Caco-2 (cell line): ENCODE measurements at regions of chr6 and their contacts with region 1.

Region 1: DNA sequence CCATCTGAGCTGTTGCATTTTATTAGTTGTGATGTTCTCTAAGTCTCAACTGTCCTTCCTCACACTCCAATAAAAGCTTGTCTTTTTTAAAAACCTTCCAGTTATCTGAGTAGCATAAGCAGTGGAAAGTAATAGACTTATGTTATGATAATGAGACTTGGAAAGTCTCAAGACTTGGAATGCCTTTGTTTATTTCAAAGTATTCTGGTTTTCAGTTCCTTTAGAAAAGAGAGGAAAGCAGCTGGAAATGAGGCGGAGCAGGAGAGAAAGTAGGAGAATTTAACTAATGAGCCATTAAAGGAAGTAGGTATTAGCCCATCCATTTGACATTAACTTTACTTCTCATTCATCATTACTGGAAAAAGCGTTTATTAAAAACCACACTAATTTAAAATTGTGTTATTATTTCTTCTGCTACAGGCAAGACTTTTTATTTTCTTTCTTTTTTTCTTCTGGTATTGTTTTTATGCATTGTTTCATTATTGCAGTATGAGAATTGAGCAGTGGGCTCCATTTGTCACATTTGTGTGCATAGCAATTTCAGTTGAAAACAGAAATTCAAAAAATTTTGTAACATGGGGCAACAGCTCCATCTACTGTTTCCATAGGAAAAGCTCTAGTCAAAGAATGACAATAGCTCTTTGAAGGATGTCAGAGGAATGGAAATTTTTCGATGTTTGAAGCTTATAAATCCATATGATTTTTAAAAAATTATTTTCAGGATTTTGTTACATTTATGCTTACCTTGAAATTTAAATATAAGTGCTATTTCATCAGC is 194.8 kb downstream of the COL9A1 start:
- DNase-seq: peak in 1 of 2 experiments; percentile 37
- H3K4me3 ChIP-seq: no peak overlapping the region
- H3K4me3 Mint-ChIP-seq: no peak overlapping the region
- H3K27ac Mint-ChIP-seq: no peak overlapping the region
- H3K4me1 ChIP-seq: no peaks in the 10 kb centered on the region
- H3K4me1 Mint-ChIP-seq: no peaks in the 10 kb centered on the region
- H3K27me3 ChIP-seq: no peaks in the 10 kb centered on the region
- H3K27me3 Mint-ChIP-seq: peaks cover 12% of the 10 kb centered on the region
- CTCF ChIP-seq: peak; percentile 68

Region 2: GRCh38 chr6:68343901-68344300 is 1764.1 kb before region 1 on chr6:
- CTCF ChIA-PET with region 1: no interaction called
- POLR2A ChIA-PET with region 1: no interaction called
- intact Hi-C with region 1: loop called (anchors 10 kb)
- DNase-seq: peak; percentile 46 to 61
- H3K4me3 ChIP-seq: no peak overlapping the region
- H3K4me3 Mint-ChIP-seq: no peak overlapping the region
- H3K27ac Mint-ChIP-seq: no peak overlapping the region
- H3K4me1 ChIP-seq: no peaks in the 10 kb centered on the region
- H3K4me1 Mint-ChIP-seq: no peaks in the 10 kb centered on the region
- H3K27me3 ChIP-seq: no peaks in the 10 kb centered on the region
- H3K27me3 Mint-ChIP-seq: no peaks in the 10 kb centered on the region
- CTCF ChIP-seq: peak; percentile 33 to 57

Region 3: GRCh38 chr6:68958327-68958726 is 1149.7 kb before region 1 on chr6:
- CTCF ChIA-PET with region 1: no interaction called
- POLR2A ChIA-PET with region 1: interaction called, 11 read pairs
- intact Hi-C with region 1: no loop called
- DNase-seq: no peak
- H3K4me3 ChIP-seq: no peak overlapping the region
- H3K4me3 Mint-ChIP-seq: no peak overlapping the region
- H3K27ac Mint-ChIP-seq: no peak overlapping the region
- H3K4me1 ChIP-seq: no peaks in the 10 kb centered on the region
- H3K4me1 Mint-ChIP-seq: no peaks in the 10 kb centered on the region
- H3K27me3 ChIP-seq: no peaks in the 10 kb centered on the region
- H3K27me3 Mint-ChIP-seq: peaks cover 8% of the 10 kb centered on the region
- CTCF ChIP-seq: no peak

Region 4: DNA sequence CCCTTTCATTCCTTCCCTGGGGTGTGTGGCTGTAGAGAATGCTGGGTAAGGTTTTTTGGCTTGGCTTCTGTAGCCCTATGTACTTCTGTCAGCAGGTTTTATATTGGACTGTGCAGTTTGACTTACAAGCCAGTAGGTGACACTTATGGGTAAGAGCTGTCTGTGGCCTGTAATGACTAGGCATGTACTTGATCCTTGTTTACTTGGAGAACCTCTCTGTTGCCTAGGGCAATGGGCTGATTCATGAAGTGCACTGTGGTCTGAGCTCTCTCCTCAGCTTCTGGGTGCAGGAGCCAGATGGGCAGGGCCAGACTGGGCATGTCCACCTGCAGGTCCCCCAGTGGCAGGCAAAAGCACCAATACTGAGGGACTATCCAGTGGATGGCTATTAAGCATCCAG is 928.4 kb before region 1 on chr6:
- CTCF ChIA-PET with region 1: no interaction called
- POLR2A ChIA-PET with region 1: no interaction called
- intact Hi-C with region 1: loop called (anchors 10 kb)
- DNase-seq: peak in 1 of 2 experiments; percentile 5
- H3K4me3 ChIP-seq: no peak overlapping the region
- H3K4me3 Mint-ChIP-seq: no peak overlapping the region
- H3K27ac Mint-ChIP-seq: no peak overlapping the region
- H3K4me1 ChIP-seq: 0 out of 2 replicates have a peak, but pooled peaks cover 4% of the 10 kb centered on the region
- H3K4me1 Mint-ChIP-seq: no peaks in the 10 kb centered on the region
- H3K27me3 ChIP-seq: no peaks in the 10 kb centered on the region
- H3K27me3 Mint-ChIP-seq: no peaks in the 10 kb centered on the region
- CTCF ChIP-seq: no peak

Region 5: DNA sequence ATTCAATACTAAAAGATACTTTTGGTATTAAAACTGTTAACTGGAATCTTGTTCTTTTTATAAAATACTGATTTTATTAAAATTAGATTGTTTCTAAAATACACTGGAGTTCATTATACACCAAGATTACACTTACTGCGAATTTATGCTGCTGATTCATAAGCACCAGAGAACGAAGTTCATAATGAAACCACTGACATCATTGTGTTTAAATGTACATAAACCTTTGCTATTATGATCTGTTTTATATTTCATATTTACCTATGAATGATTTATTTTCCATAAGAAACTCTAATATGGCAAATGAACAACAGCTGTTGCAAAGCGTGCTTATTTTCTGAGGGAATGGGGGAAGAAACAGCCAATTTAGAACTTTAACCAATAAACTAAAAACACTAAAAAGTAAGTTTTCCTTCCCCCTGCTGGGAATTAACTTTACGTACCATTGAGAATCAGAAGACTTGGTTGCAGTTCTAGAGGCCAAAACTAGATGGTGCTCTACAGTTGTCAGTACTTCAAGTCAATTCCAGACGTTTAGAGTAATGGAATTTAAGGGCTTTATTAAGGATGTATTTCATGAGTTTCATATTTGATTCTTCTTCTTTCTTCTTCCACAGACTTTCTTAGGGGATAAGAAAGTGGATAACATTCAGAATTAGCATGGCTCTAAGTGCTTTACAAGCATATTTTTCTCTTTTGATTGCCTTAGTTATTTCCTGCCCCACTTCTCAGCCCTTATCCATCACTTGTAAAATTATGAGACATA is 272.4 kb before region 1 on chr6:
- CTCF ChIA-PET with region 1: no interaction called
- POLR2A ChIA-PET with region 1: no interaction called
- intact Hi-C with region 1: loop called (anchors 1 kb)
- DNase-seq: peak in 1 of 2 experiments; percentile 42
- H3K4me3 ChIP-seq: no peak overlapping the region
- H3K4me3 Mint-ChIP-seq: no peak overlapping the region
- H3K27ac Mint-ChIP-seq: no peak overlapping the region
- H3K4me1 ChIP-seq: no peaks in the 10 kb centered on the region
- H3K4me1 Mint-ChIP-seq: no peaks in the 10 kb centered on the region
- H3K27me3 ChIP-seq: no peaks in the 10 kb centered on the region
- H3K27me3 Mint-ChIP-seq: peaks cover 5% of the 10 kb centered on the region
- CTCF ChIP-seq: peak; percentile 56 to 79

Region 6: DNA sequence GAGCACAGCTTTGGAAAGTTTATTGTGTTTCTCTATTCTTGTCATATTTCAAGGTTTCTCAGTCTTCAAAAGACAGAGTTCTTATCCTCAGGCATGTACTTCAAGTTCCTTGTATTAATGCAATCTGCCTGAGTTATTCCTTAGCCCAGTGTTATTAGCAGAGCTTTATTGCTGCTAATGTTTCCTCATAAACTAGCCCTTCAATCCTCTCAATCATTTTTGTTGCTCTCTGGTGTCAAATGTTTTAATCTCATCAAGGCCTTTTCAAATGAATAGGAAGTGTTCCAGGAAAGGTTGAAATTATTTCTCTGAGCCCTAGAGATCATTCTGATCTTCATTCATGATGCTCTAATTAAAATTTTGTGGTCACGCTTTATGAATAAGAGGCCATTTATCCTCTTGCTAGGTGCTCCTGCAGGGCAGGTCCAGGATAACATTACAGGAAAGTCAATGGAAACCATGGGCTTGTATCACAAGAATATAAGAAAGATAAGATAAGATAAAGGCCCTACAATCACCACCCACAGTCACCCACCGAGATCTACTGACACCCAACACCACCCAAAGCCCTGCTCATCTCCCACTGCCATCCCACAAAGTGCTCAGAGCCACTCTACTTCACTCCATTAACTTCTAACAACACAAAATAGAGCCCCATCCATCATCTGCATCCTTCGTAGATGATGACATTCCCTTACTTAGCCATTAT is 69.0 kb after region 1 on chr6:
- CTCF ChIA-PET with region 1: no interaction called
- POLR2A ChIA-PET with region 1: no interaction called
- intact Hi-C with region 1: no loop called
- DNase-seq: no peak
- H3K4me3 ChIP-seq: no peak overlapping the region
- H3K4me3 Mint-ChIP-seq: no peak overlapping the region
- H3K27ac Mint-ChIP-seq: no peak overlapping the region
- H3K4me1 ChIP-seq: no peaks in the 10 kb centered on the region
- H3K4me1 Mint-ChIP-seq: no peaks in the 10 kb centered on the region
- H3K27me3 ChIP-seq: no peaks in the 10 kb centered on the region
- H3K27me3 Mint-ChIP-seq: peaks cover 17% of the 10 kb centered on the region
- CTCF ChIP-seq: no peak